ENCODE measurements at regions of chr4 and their contacts with region 1.

Region 1: GRCh38 chr4:167032871-167033270 is 201.4 kb downstream of the SPOCK3 start:
- DNase-seq: no peak
- ATAC-seq: no peak
- H3K4me3 ChIP-seq: no peak overlapping the region
- H3K27ac ChIP-seq: no peak overlapping the region
- H3K4me1 ChIP-seq: no peaks in the 10 kb centered on the region
- H3K27me3 ChIP-seq: no peaks in the 10 kb centered on the region
- CTCF ChIP-seq: no peak
- POLR2A ChIP-seq: no peak

Region 2: DNA sequence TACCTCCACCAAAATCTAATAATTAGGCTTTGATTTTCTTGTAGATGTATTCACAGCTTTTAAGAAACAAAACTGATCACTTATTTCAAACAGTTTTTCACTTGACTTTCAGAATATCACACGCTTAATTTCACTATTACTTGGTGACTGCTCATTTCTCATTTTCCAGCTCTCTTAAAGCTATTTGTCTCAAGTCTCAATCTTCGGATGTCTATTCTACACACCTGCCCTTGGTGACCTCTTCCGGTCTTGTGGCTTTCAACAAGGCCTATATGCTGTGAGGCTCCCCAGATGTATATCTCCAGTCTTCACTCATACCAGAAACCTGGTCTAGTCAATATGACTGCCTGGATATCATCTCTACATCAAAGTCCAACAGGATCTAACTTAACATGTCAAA is 1024.5 kb after region 1 on chr4:
- in situ Hi-C with region 1: loop called in 1 of 4 experiments (anchors 25 kb)
- intact Hi-C with region 1: no loop called
- DNase-seq: no peak
- ATAC-seq: no peak
- H3K4me3 ChIP-seq: no peak overlapping the region
- H3K27ac ChIP-seq: no peak overlapping the region
- H3K4me1 ChIP-seq: no peaks in the 10 kb centered on the region
- H3K27me3 ChIP-seq: no peaks in the 10 kb centered on the region
- CTCF ChIP-seq: no peak
- POLR2A ChIP-seq: no peak

Measured in gastrocnemius medialis (tissue), 4 donors.